Left cardiac atrium (tissue), 4 donors: ENCODE measurements at regions of chr12 and their contacts with region 1.

Region 1: DNA sequence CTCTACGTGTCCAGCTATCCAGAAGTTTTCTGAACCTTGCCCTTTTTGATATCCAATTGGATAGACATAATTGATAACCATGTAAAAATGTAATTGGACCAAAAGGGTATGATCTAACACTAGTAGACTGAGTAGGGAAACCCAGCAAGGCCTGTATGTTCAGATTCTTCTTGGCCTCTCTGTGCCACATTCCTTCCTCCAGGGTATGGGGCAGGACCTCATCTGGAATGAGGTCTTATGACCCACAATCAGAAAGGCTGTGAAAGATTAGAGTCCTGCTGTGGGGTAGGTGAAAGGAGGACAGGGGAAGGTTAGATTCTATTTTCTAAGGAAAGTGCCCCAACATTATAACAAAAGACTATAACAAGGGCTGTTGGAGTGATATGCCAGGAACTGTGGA is 51.3 kb upstream of the A2ML1 start:
- DNase-seq: no peak
- ATAC-seq: no peak

Region 2: GRCh38 chr12:8572507-8572906 is 198.6 kb before region 1 on chr12:
- intact Hi-C with region 1: no loop called
- DNase-seq: no peak
- ATAC-seq: peak in 1 of 2 donors; percentile 23

Region 3: GRCh38 chr12:8860165-8860961 is 89.3 kb after region 1 on chr12:
- intact Hi-C with region 1: loop called in 1 of 2 experiments (anchors 10 kb)
- DNase-seq: no peak
- ATAC-seq: peak in 1 of 2 donors; percentile 68

Region 4: GRCh38 chr12:9039397-9039977 is 268.4 kb after region 1 on chr12:
- intact Hi-C with region 1: loop called in 1 of 2 experiments (anchors 10 kb)
- DNase-seq: no peak
- ATAC-seq: peak; percentile 68 to 73